CD8-positive, alpha-beta T cell (primary cell): ENCODE measurements at regions of chr9 and their contacts with region 1.

Region 1: GRCh38 chr9:419571-420402 is 205.1 kb downstream of the DOCK8 start:
- DNase-seq: no peak
- ATAC-seq: no peak
- H3K4me3 ChIP-seq: no peak overlapping the region
- H3K4me3 Mint-ChIP-seq: no peak overlapping the region
- H3K27ac ChIP-seq: no peak overlapping the region
- H3K27ac Mint-ChIP-seq: peak overlapping the region; percentile 1
- H3K4me1 ChIP-seq: no peaks in the 10 kb centered on the region
- H3K4me1 Mint-ChIP-seq: no peaks in the 10 kb centered on the region
- H3K27me3 ChIP-seq: no peaks in the 10 kb centered on the region
- H3K27me3 Mint-ChIP-seq: no peaks in the 10 kb centered on the region
- CTCF ChIP-seq: no peak

Region 2: DNA sequence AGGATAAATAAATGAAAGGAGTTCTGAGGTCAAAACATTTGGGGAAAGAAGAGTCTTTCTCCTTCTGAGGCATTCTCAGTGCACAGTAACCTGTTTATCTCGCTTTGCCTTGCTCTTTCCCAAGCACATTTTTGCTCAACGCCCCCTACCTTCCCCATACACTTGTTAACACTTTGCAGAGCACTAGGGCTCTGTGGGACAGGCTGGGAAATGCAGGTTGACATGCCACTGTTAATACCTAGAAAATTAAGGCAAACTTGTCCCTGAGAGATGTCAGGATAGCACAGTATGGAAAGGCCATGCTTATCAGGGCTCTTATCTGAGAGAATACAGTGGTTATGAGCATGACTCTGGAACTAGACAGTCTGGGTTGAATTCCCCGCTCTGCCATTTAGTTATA is 53.2 kb before region 1 on chr9:
- CTCF ChIA-PET with region 1: no interaction called
- POLR2A ChIA-PET with region 1: no interaction called
- intact Hi-C with region 1: loop called in 1 of 2 experiments (anchors 10 kb)
- DNase-seq: no peak
- ATAC-seq: no peak
- H3K4me3 ChIP-seq: no peak overlapping the region
- H3K4me3 Mint-ChIP-seq: no peak overlapping the region
- H3K27ac ChIP-seq: no peak overlapping the region
- H3K27ac Mint-ChIP-seq: peak overlapping the region; percentile 56
- H3K4me1 ChIP-seq: no peaks in the 10 kb centered on the region
- H3K4me1 Mint-ChIP-seq: peaks cover 4% of the 10 kb centered on the region
- H3K27me3 ChIP-seq: no peaks in the 10 kb centered on the region
- H3K27me3 Mint-ChIP-seq: no peaks in the 10 kb centered on the region
- CTCF ChIP-seq: no peak

Region 3: DNA sequence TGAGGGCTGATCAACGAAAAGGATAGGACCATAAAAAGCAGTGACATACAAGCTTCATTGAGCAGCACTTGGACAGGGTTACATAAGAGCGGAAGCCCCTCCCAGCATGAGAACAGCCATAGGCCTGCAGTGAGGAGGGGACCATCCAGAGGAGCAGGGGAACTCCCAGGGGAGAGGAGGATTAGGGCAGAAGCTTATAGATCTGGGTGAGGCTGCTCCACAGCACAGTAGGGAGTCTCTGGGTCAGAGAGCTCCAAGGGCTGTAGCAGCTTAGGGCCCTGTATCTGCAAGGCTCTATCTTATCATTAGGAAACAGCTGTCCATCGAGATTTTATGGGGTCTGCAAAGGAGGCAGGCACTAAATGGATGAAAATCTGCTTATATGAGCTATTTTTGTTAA is 18.6 kb before region 1 on chr9:
- CTCF ChIA-PET with region 1: no interaction called
- POLR2A ChIA-PET with region 1: no interaction called
- intact Hi-C with region 1: no loop called
- DNase-seq: no peak
- ATAC-seq: no peak
- H3K4me3 ChIP-seq: no peak overlapping the region
- H3K4me3 Mint-ChIP-seq: no peak overlapping the region
- H3K27ac ChIP-seq: peak overlapping the region in 1 of 2 experiments; percentile 23
- H3K27ac Mint-ChIP-seq: peak overlapping the region; percentile 69
- H3K4me1 ChIP-seq: no peaks in the 10 kb centered on the region
- H3K4me1 Mint-ChIP-seq: peaks cover 2% of the 10 kb centered on the region
- H3K27me3 ChIP-seq: no peaks in the 10 kb centered on the region
- H3K27me3 Mint-ChIP-seq: no peaks in the 10 kb centered on the region
- CTCF ChIP-seq: no peak

Region 4: GRCh38 chr9:469672-470551 is 50.1 kb after region 1 on chr9:
- CTCF ChIA-PET with region 1: no interaction called
- POLR2A ChIA-PET with region 1: no interaction called
- intact Hi-C with region 1: loop called in 1 of 2 experiments (anchors 10 kb)
- DNase-seq: peak; percentile 69 to 97 (median 91)
- ATAC-seq: peak; percentile 94
- H3K4me3 ChIP-seq: peak overlapping the region; percentile 69 to 75
- H3K4me3 Mint-ChIP-seq: peak overlapping the region; percentile 94
- H3K27ac ChIP-seq: peak overlapping the region; percentile 34 to 77
- H3K27ac Mint-ChIP-seq: peak overlapping the region; percentile 95
- H3K4me1 ChIP-seq: peaks cover 22% of the 10 kb centered on the region
- H3K4me1 Mint-ChIP-seq: peaks cover 25% of the 10 kb centered on the region
- H3K27me3 ChIP-seq: no peaks in the 10 kb centered on the region
- H3K27me3 Mint-ChIP-seq: no peaks in the 10 kb centered on the region
- CTCF ChIP-seq: no peak